Dorsolateral prefrontal cortex (tissue), 120 donors: ENCODE measurements at regions of chr1 and their contacts with region 1.

Region 1: DNA sequence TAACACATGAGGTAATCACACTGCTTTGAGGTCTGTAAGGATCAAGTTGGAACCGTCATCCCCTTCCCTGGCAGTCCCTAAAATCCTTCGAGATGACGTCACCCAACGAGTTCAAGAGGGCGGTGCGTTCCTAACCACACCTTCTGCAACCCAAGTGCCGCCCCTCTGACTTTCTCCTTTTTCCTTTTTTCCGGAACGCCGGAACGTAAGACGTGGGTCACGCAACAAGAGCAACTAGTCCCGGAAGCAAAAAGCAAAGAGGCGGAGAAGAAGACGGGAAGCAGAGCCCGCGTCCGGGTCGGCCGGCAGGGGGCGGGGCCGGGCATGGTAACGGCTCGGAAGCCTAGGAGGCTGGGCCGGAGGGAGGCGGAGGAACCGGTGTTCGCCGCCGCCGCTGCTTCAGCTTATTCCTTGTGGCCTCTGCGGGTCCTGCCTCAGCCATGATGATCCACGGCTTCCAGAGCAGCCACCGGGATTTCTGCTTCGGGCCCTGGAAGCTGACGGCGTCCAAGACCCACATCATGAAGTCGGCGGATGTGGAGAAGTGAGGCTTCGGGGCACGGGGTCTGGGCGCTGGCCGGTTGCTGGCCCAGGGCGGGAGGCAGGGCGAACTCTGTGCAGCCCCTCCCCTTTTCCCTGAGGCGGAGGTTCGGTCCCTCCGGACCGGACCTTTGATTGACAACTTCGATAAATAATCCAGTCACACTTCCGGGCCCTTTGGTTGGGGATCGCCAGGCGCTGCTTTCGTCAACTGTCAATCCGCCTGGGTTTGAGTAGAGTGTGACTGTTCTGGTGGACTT is at the start of gene TIPRL:
- DNase-seq: peak; percentile 90 to 97 (median 96)
- H3K4me3 ChIP-seq: peak within 1 kb of the TSS; percentile 71 to 99 (median 86)
- H3K27ac ChIP-seq: peak within 1 kb of the TSS; percentile 52 to 99 (median 92)
- H3K27me3 ChIP-seq: peaks cover 0 to 18% (median 0%) of the 10 kb centered on the region in 45 donors
- CTCF ChIP-seq: peak; percentile 40 to 92 (median 78)
- total RNA-seq, gene TIPRL: 14.6 to 51.2 (median 34.7) TPM

Region 2: GRCh38 chr1:167862432-167863076 is 316.3 kb before region 1 on chr1:
- intact Hi-C with region 1: no loop called
- DNase-seq: no peak
- H3K4me3 ChIP-seq: no peak overlapping the region
- H3K27ac ChIP-seq: no peak overlapping the region
- H3K27me3 ChIP-seq: no peaks in the 10 kb centered on the region
- CTCF ChIP-seq: no peak

Region 3: GRCh38 chr1:167957710-167958109 is 221.1 kb before region 1 on chr1:
- intact Hi-C with region 1: no loop called
- DNase-seq: no peak
- H3K4me3 ChIP-seq: no peak overlapping the region
- H3K27ac ChIP-seq: no peak overlapping the region
- H3K27me3 ChIP-seq: no peaks in the 10 kb centered on the region
- CTCF ChIP-seq: no peak

Region 4: DNA sequence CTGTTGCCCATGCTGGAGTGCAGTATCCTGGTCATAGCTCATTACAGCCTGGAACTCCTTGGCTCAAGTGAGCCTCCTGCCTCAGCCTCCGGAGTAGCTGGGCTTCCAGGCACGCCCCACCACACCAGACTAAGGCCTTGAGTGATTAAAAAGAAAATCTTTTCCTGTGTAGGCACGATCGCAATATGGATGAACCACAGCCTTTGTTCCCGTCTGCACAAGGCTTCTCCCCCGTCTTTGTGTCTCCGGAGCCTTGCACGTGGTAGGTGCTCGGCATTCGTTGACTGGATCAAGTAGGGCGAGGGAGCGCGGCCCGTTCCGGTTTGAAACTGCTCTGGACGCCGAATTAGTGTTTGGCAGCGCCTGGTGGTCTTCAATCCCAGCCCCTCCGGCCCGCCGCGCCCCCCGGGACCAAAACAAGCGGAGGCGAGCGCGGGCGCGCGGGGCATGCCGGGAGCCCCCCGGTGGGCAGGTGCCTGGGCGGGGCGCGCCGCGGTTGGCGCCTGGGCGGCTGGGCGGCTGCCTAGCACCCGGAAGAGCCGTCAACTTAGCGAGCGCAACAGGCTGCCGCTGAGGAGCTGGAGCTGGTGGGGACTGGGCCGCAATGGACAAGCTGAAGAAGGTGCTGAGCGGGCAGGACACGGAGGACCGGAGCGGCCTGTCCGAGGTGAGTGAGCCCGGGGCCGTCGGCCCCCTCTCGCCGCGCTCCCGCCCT is 46.8 kb after region 1 on chr1 and contains the start of gene SFT2D2:
- intact Hi-C with region 1: loop called (anchors 5 kb)
- DNase-seq: peak; percentile 10 to 84 (median 57)
- H3K4me3 ChIP-seq: peak within 1 kb of the TSS; percentile 50 to 97 (median 88)
- H3K27ac ChIP-seq: peak within 1 kb of the TSS; percentile 8 to 92 (median 78)
- H3K27me3 ChIP-seq: peaks cover 0 to 3% (median 0%) of the 10 kb centered on the region in 45 donors
- CTCF ChIP-seq: peak in 13 of 56 donors; percentile 9 to 49 (median 28)
- total RNA-seq, gene SFT2D2: 15.0 to 59.6 (median 26.0) TPM

Region 5: GRCh38 chr1:168408536-168409242 is 229.9 kb after region 1 on chr1:
- intact Hi-C with region 1: no loop called
- DNase-seq: no peak
- H3K4me3 ChIP-seq: no peak overlapping the region
- H3K27ac ChIP-seq: no peak overlapping the region
- H3K27me3 ChIP-seq: no peaks in the 10 kb centered on the region
- CTCF ChIP-seq: no peak